ENCODE measurements at regions of chr10 and their contacts with region 1.

Region 1: GRCh38 chr10:104209575-104210198 is 22.5 kb downstream of the CFAP43 start:
- DNase-seq: peak; percentile 21 to 66 (median 38)
- H3K4me3 ChIP-seq: no peak overlapping the region
- H3K27ac ChIP-seq: no peak overlapping the region
- H3K4me1 ChIP-seq: no peaks in the 10 kb centered on the region
- H3K27me3 ChIP-seq: no peaks in the 10 kb centered on the region
- CTCF ChIP-seq: peak; percentile 33 to 62 (median 56)
- POLR2A ChIP-seq: no peak

Region 2: GRCh38 chr10:103888113-103888841 is 321.4 kb before region 1 on chr10:
- intact Hi-C with region 1: loop called in 1 of 2 experiments (anchors 5 kb)
- DNase-seq: peak; percentile 71 to 81 (median 80)
- H3K4me3 ChIP-seq: no peak overlapping the region
- H3K27ac ChIP-seq: peak overlapping the region in 4 of 5 donors; percentile 22 to 78 (median 42)
- H3K4me1 ChIP-seq: peaks cover 14 to 25% of the 10 kb centered on the region in 2 donors
- H3K27me3 ChIP-seq: no peaks in the 10 kb centered on the region
- CTCF ChIP-seq: peak; percentile 82 to 95 (median 86)
- POLR2A ChIP-seq: no peak

Region 3: DNA sequence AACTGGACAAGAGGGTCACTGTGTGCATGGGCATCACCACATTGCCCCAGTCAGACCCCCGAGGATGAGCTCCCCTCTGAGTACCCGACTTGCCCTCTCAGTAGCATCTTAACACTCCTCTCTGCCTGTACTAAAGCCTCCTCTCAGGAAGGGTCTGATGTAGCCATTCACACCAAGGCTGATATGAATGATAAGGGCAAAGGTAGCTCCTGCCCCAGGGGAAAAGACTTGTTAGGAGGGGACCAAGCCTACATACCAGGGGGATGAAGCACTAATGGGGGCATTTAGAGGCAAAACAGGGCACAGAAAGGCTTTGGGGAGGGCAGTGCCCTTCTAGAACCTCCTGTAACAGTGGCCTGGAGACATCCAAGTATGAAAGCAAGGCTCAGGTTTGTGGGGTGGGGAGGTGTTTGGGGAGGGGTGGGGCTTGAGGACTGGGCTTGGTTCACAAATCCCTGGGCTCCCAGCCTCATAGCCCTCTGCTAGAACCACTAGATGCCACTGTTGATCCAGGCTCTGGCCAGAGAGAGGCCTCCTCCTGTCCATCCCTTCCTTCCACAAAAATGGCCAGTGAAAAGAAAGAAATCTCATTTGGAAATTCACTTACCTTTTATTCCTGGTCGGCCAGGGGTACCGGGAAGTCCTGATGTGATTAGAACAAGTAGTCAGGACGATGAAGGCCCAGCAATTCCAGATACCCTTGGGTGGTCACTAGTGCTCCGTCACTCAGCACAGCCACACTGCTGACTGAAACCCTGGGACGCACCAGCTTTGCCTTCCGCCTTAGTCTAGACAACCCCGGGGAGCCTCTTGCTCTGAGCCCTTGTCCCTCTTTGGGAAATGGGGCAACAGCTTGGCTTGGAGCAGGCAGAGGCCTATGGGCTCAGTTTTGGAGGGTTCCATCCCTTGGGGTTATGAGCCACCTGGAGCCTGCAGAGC is 164.3 kb before region 1 on chr10:
- intact Hi-C with region 1: loop called (anchors 2 to 5 kb)
- DNase-seq: peak; percentile 65 to 83 (median 77)
- H3K4me3 ChIP-seq: no peak overlapping the region
- H3K27ac ChIP-seq: no peak overlapping the region
- H3K4me1 ChIP-seq: no peaks in the 10 kb centered on the region
- H3K27me3 ChIP-seq: no peaks in the 10 kb centered on the region
- CTCF ChIP-seq: peak; percentile 37 to 73 (median 68)
- POLR2A ChIP-seq: no peak

Region 4: DNA sequence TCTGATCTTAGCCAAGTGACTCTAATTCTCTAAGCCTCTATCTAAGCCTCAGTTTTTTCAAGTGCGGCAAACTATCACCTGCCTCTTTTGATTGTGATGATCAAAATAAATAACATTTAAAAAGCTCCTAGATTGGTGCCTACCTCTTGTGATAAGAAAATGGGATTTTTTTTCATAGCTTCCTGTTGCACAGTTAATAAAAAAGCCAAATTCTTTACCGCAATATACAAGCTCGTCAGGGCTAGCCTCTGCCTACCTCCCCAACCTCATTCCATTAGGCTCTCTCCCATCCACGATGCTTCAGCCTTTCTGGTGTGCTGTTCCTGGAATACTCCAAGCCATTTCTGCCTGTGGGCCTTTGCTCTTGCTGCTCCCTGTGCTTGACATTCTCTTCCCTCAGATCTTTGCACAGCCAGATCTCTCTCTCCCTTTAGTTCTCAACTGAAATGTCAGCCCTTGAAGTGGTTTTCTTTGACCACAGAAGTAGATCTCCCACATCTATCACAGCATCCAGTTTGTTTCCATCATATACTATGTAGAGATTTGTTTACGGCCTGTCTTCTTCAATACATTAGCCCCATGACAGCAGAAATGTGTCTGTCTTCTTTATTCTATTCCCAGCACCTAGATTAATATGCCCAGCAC is 39.0 kb before region 1 on chr10:
- intact Hi-C with region 1: no loop called
- DNase-seq: no peak
- H3K4me3 ChIP-seq: no peak overlapping the region
- H3K27ac ChIP-seq: no peak overlapping the region
- H3K4me1 ChIP-seq: no peaks in the 10 kb centered on the region
- H3K27me3 ChIP-seq: no peaks in the 10 kb centered on the region
- CTCF ChIP-seq: no peak
- POLR2A ChIP-seq: no peak